Mammary epithelial cell (primary cell): ENCODE measurements at regions of chrX and their contacts with region 1.

Region 1: DNA sequence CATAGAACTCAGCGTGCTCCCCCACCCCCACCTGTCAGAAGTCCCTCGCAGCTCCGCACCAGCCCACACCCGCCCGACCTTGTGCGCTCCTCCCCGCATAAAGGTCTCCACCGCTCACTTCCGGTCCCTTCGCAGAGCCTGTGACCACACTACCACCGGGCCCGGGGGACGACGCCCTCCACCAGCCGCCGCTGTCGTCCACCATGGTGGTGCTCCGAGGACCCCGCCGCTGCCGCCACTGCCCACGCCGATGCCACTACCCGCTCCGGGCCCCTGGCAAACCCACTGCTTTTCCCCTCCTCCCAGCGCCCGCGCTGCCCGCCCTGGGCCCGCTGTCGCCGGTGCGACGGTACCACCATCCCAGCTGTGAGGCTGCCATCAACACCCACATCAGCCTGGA is 79.8 kb upstream of the LANCL3 start:
- DNase-seq: no peak
- H3K4me3 ChIP-seq: no peak overlapping the region
- H3K27ac ChIP-seq: no peak overlapping the region
- H3K4me1 ChIP-seq: no peaks in the 10 kb centered on the region
- H3K27me3 ChIP-seq: no peaks in the 10 kb centered on the region
- CTCF ChIP-seq: no peak

Region 2: DNA sequence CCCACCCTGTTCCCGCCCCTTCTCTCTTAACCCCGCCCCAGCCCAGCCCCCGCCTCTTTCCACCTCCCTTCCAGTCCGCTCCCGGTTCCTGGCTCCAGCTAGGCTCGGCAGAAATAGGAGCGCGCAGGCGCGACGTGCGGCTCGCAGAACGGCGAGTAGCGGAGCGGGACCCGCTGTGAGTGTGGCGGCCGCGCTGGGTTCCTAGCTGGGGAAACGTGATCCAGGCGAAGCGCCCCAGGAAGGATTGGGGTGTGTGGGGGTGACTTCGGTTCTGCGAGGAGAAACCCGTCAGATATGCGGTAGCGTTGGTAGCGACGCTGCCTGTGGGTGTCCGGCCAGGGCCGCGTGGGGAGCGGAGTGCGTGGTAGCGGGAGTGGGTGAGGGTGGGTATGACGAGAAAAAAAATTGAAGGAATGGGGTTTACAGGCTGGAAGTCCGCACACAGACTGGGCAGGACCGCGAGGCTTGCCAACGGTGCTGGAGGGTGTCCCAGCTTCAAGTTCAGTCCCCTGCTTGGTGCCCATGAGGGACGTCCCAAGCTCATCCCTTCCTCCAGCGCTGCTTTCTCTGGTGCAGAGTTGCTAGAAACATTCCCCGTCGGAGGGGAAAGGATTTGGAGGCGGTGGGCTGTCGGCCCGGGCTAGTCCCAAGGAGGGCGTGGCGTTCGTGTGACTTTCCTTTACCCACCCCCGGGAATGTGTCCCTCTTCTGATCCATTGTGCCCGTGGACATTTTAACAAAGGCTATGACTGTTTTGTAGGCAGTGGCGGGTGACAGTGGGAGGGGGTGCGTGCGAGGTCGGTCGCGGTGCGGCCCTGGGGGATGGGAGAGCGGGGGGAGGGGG is 142.2 kb before region 1 on chrX and contains the start of gene PRRG1:
- CTCF ChIA-PET with region 1: no interaction called
- dilution Hi-C with region 1: no loop called
- in situ Hi-C with region 1: no loop called
- intact Hi-C with region 1: no loop called
- DNase-seq: peak; percentile 78
- H3K4me3 ChIP-seq: peak within 1 kb of the TSS; percentile 60 to 72 (median 72)
- H3K27ac ChIP-seq: peak within 1 kb of the TSS; percentile 55
- H3K4me1 ChIP-seq: peaks cover 4% of the 10 kb centered on the region
- H3K27me3 ChIP-seq: peaks cover 3% of the 10 kb centered on the region
- CTCF ChIP-seq: no peak
- total RNA-seq, gene PRRG1: 13.9 to 14.0 TPM

Region 3: DNA sequence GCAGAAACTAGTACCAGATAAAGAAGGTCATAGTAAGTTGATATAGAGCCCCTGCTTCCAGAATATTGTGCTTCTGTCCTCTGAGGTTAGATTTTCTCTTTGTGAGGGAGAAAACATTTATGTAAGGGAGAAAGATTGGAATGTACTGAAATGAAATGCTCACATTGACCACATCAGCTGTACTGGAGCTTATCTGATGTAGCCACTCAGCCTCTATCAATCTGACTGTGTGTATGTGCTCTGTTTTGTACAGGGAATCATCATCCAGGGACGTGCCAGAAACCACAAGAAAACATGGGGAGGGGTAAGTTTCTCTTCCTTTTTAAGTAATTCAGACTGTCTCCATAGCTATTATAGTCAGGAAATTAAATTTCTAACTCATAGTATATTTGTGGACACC is 85.7 kb before region 1 on chrX:
- CTCF ChIA-PET with region 1: no interaction called
- dilution Hi-C with region 1: loop called (anchors 5 kb)
- in situ Hi-C with region 1: no loop called
- intact Hi-C with region 1: no loop called
- DNase-seq: peak; percentile 47
- H3K4me3 ChIP-seq: no peak overlapping the region
- H3K27ac ChIP-seq: no peak overlapping the region
- H3K4me1 ChIP-seq: no peaks in the 10 kb centered on the region
- H3K27me3 ChIP-seq: no peaks in the 10 kb centered on the region
- CTCF ChIP-seq: no peak

Region 4: DNA sequence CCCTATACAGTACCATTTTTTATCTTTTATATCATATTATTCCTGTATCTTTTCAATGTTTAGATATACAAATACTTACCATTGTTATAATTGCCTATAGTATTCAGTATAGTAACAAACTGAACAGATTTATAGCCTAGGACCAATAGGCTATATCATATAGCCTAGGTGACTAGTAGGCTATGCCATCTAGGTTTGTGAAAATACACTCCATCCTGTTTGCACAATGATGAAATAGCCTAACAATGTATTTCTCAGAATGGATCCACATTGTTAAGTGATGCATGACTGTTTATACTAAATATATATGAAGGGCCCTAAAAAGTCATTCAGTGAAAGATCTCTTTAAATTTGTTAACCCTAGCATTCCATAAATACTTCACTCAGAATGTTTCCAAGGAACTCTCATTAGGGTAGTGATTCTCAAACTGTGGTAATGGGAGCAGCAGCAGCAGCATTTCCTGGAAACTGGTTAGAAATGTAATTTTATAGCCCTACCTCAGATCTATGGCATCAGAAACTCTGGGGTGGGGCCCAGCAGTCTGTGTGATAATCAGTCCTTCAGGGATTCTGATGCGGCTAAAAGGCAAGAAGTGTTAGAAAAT is 67.7 kb before region 1 on chrX:
- CTCF ChIA-PET with region 1: no interaction called
- dilution Hi-C with region 1: no loop called
- in situ Hi-C with region 1: no loop called
- intact Hi-C with region 1: no loop called
- DNase-seq: no peak
- H3K4me3 ChIP-seq: no peak overlapping the region
- H3K27ac ChIP-seq: no peak overlapping the region
- H3K4me1 ChIP-seq: no peaks in the 10 kb centered on the region
- H3K27me3 ChIP-seq: no peaks in the 10 kb centered on the region
- CTCF ChIP-seq: no peak

Region 5: DNA sequence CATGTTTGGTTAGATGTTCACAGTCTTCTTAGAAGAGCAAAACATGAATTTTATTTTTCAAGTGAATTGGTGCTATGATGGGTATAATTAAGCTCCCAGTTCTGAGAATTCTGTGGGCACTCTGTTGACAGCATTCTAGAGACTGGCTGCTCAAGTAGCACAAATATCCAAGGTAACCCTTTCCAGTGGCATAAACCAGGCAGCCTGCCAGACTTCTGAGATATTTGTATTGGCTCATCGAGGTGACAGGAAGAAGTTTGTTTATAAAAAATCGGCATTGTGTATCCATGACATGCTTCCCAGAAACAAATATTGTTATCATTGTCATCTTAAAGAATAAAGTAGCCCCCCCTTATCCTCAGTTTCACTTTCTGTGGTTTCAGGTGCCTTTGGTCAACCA is 108.0 kb after region 1 on chrX:
- CTCF ChIA-PET with region 1: no interaction called
- dilution Hi-C with region 1: no loop called
- in situ Hi-C with region 1: no loop called
- intact Hi-C with region 1: no loop called
- DNase-seq: peak; percentile 46
- H3K4me3 ChIP-seq: no peak overlapping the region
- H3K27ac ChIP-seq: no peak overlapping the region
- H3K4me1 ChIP-seq: no peaks in the 10 kb centered on the region
- H3K27me3 ChIP-seq: no peaks in the 10 kb centered on the region
- CTCF ChIP-seq: no peak